AG04449 (cell line): ENCODE measurements at regions of chr17 and their contacts with region 1.

Region 1: GRCh38 chr17:59786536-59787319 is 79.3 kb downstream of the VMP1 start:
- DNase-seq: peak; percentile 100
- H3K4me3 ChIP-seq: no peak overlapping the region
- CTCF ChIP-seq: no peak

Region 2: DNA sequence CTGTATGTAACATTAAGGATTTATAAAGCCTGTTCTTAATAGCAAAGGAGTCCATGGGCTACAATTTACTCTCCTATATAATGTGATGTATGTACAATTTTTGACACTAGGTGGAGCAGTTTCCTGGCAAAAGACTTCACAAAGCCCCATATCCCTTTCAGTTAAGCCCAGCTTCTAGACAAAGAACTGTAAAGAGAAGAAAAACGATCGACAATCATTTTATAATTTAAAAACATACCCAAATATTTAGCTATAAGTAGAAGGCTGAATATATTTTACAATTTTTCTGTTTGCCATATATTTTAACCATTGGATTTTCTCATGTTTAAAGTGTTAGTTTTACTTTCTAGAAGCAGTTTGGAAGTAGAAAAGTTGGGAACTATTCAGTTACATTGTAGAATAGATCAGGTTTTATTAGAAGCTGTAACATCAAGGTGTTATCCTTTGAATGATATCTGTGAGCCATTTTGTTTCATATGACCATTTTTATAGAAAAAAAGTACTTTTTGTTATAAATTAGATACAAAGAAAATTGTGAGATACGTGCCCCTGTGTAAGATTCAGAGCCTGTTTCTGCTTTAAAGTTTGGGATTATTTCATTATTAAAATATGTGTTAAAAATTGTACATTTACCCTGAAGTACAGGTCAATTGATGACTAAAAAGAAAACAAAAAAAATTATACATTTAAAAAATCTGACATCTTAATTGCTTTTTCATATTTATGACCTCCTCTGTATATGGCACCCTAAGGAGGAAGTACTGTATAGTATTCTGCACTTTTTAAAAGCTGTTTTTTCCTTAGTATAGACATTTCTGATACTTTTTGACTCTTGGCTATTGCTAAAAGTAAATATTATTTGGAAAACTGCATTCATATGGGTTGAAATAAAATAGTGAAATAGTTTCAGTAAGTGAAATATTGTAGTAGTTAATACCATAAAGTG is 32.9 kb before region 1 on chr17:
- CTCF ChIA-PET with region 1: interaction called, 9 read pairs
- POLR2A ChIA-PET with region 1: interaction called, 11 read pairs
- DNase-seq: peak; percentile 65
- H3K4me3 ChIP-seq: peak overlapping the region; percentile 3; the same call in 1 of the 2 replicates
- CTCF ChIP-seq: peak; percentile 40

Region 3: DNA sequence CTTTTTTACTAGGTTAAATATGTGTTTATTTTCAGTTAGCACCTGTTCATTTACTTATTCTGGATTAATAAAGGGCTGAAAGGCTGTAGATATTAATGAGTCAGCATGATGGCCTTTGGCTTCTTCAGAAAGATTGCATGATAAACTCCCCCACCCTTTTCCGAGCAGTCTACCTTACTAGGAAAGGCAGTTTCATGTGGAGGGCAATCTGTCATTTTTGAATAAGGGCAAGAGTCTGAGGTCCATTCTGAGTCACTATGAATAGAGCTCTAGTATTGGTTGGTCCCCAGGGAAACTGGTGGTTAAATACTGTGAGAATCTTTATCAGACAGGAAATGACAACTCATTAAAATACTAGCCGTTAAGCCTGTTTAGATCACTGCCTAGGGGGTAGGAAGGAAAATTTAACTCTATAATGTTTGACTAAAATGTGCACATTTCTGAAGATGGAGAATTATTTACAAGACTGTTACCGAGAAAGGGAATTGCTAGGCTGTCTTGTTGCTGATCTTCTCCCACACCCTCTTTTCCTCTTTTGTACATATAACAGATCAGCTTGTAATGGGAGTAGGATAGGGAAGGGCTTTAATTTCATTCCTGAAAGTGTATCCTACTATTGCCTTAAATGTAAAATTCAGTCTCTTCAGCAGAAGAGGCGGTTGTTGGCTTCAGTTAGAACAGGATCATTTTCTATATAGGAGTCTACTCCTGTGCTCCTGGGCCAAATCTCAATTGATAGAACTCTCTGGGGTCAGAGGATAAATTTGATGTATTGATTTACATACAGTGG is 42.7 kb after region 1 on chr17:
- CTCF ChIA-PET with region 1: no interaction called
- POLR2A ChIA-PET with region 1: interaction called, 11 read pairs
- DNase-seq: peak; percentile 98
- H3K4me3 ChIP-seq: peak overlapping the region; percentile 37
- CTCF ChIP-seq: no peak

Region 4: GRCh38 chr17:59846394-59847165 is 59.9 kb after region 1 on chr17:
- CTCF ChIA-PET with region 1: no interaction called
- POLR2A ChIA-PET with region 1: interaction called, 39 read pairs
- DNase-seq: no peak
- H3K4me3 ChIP-seq: no peak overlapping the region
- CTCF ChIP-seq: no peak